Caco-2 (cell line): ENCODE measurements at regions of chr3 and their contacts with region 1.

Region 1: GRCh38 chr3:113745273-113746068 is 578 bp downstream of the NAA50 start:
- DNase-seq: peak; percentile 75 to 79
- H3K4me3 ChIP-seq: peak overlapping the region; percentile 78
- H3K4me3 Mint-ChIP-seq: peak overlapping the region; percentile 96
- H3K27ac Mint-ChIP-seq: peak overlapping the region; percentile 100
- H3K4me1 ChIP-seq: 0 out of 2 replicates have a peak, but pooled peaks cover 3% of the 10 kb centered on the region
- H3K4me1 Mint-ChIP-seq: peaks cover 16% of the 10 kb centered on the region
- H3K27me3 ChIP-seq: no peaks in the 10 kb centered on the region
- H3K27me3 Mint-ChIP-seq: no peaks in the 10 kb centered on the region
- CTCF ChIP-seq: peak; percentile 42 to 68

Region 2: GRCh38 chr3:113339616-113340244 is 405.7 kb before region 1 on chr3:
- CTCF ChIA-PET with region 1: no interaction called
- POLR2A ChIA-PET with region 1: no interaction called
- intact Hi-C with region 1: no loop called
- DNase-seq: no peak
- H3K4me3 ChIP-seq: no peak overlapping the region
- H3K4me3 Mint-ChIP-seq: no peak overlapping the region
- H3K27ac Mint-ChIP-seq: no peak overlapping the region
- H3K4me1 ChIP-seq: no peaks in the 10 kb centered on the region
- H3K4me1 Mint-ChIP-seq: no peaks in the 10 kb centered on the region
- H3K27me3 ChIP-seq: no peaks in the 10 kb centered on the region
- H3K27me3 Mint-ChIP-seq: no peaks in the 10 kb centered on the region
- CTCF ChIP-seq: peak; percentile 23 to 36

Region 3: GRCh38 chr3:113514265-113514769 is 231.2 kb before region 1 on chr3:
- CTCF ChIA-PET with region 1: interaction called, 6 read pairs
- POLR2A ChIA-PET with region 1: interaction called, 4 read pairs
- intact Hi-C with region 1: loop called (anchors 5 kb)
- DNase-seq: peak in 1 of 2 experiments; percentile 6
- H3K4me3 ChIP-seq: peak overlapping the region; percentile 83
- H3K4me3 Mint-ChIP-seq: no peak overlapping the region
- H3K27ac Mint-ChIP-seq: no peak overlapping the region
- H3K4me1 ChIP-seq: no peaks in the 10 kb centered on the region
- H3K4me1 Mint-ChIP-seq: peaks cover 8% of the 10 kb centered on the region
- H3K27me3 ChIP-seq: no peaks in the 10 kb centered on the region
- H3K27me3 Mint-ChIP-seq: no peaks in the 10 kb centered on the region
- CTCF ChIP-seq: no peak

Region 4: GRCh38 chr3:113676261-113676660 is 69.2 kb before region 1 on chr3:
- CTCF ChIA-PET with region 1: no interaction called
- POLR2A ChIA-PET with region 1: no interaction called
- intact Hi-C with region 1: no loop called
- DNase-seq: no peak
- H3K4me3 ChIP-seq: no peak overlapping the region
- H3K4me3 Mint-ChIP-seq: no peak overlapping the region
- H3K27ac Mint-ChIP-seq: no peak overlapping the region
- H3K4me1 ChIP-seq: no peaks in the 10 kb centered on the region
- H3K4me1 Mint-ChIP-seq: no peaks in the 10 kb centered on the region
- H3K27me3 ChIP-seq: no peaks in the 10 kb centered on the region
- H3K27me3 Mint-ChIP-seq: no peaks in the 10 kb centered on the region
- CTCF ChIP-seq: no peak

Region 5: GRCh38 chr3:113696658-113697499 is 48.6 kb before region 1 on chr3:
- CTCF ChIA-PET with region 1: interaction called, 5 read pairs
- POLR2A ChIA-PET with region 1: interaction called, 6 read pairs
- intact Hi-C with region 1: loop called (anchors 1 kb)
- DNase-seq: peak; percentile 99
- H3K4me3 ChIP-seq: peak overlapping the region; percentile 84
- H3K4me3 Mint-ChIP-seq: no peak overlapping the region
- H3K27ac Mint-ChIP-seq: no peak overlapping the region
- H3K4me1 ChIP-seq: peaks cover 18% of the 10 kb centered on the region
- H3K4me1 Mint-ChIP-seq: no peaks in the 10 kb centered on the region
- H3K27me3 ChIP-seq: no peaks in the 10 kb centered on the region
- H3K27me3 Mint-ChIP-seq: no peaks in the 10 kb centered on the region
- CTCF ChIP-seq: no peak

Region 6: DNA sequence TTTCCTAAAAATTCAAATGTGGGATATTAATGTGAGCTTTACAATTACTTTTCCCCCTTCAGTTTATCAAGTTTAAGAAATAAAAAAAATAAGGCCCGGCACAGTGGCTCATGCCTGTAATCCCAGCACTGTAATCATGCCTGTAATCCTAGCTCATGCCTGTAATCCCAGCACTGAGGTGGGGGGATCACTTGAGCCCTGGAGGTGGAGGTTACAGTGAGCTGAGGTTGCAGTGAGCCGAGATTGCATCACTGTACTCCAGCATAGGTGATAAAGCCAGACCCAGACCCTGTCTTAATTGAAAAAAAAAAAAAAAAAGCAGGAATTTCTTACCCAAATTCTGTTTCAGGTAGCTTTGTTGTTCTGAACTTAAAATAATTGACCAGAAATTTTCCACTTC is 19.2 kb after region 1 on chr3:
- CTCF ChIA-PET with region 1: interaction called, 16 read pairs
- POLR2A ChIA-PET with region 1: interaction called, 4 read pairs
- intact Hi-C with region 1: no loop called
- DNase-seq: no peak
- H3K4me3 ChIP-seq: no peak overlapping the region
- H3K4me3 Mint-ChIP-seq: no peak overlapping the region
- H3K27ac Mint-ChIP-seq: no peak overlapping the region
- H3K4me1 ChIP-seq: no peaks in the 10 kb centered on the region
- H3K4me1 Mint-ChIP-seq: no peaks in the 10 kb centered on the region
- H3K27me3 ChIP-seq: no peaks in the 10 kb centered on the region
- H3K27me3 Mint-ChIP-seq: no peaks in the 10 kb centered on the region
- CTCF ChIP-seq: no peak

Region 7: DNA sequence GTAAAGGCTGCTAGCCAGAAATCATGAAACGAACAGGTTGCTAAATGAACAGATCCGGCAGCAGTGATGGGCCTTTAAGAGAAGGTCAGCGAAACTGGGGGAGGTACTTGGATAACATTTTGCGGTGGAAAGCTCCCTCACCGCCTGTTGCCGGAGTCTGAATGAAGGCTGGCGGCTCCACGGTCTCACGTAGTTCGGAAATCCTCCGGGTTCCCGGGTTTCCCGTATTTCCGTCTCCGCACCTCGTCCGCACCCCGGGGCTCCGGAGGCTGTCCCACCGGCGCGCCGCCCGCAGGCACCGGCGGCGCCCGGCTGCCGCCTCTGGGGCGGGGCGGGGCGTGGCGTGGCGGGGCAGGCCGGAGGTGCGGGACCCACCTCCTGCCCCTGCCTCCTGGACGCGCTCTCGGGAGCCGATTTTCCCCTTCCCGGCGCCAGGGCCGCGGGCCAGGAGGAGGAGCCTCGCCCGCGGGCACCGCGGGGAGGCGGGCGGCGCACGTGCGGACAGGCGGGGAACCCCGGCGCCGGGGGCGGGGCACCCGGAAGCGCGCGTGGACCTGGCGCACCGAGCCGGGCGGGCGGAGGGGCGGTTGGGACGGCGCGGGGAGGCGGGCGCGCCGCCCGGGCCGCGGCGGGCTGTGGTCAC is 202.0 kb after region 1 on chr3 and contains the start of gene ZDHHC23:
- CTCF ChIA-PET with region 1: no interaction called
- POLR2A ChIA-PET with region 1: no interaction called
- intact Hi-C with region 1: loop called (anchors 5 kb)
- DNase-seq: peak; percentile 80 to 87
- H3K4me3 ChIP-seq: peak within 1 kb of the TSS; percentile 90
- H3K4me3 Mint-ChIP-seq: peak within 1 kb of the TSS; percentile 80
- H3K27ac Mint-ChIP-seq: no peak within 1 kb of the TSS
- H3K4me1 ChIP-seq: no peaks in the 10 kb centered on the region
- H3K4me1 Mint-ChIP-seq: peaks cover 7% of the 10 kb centered on the region
- H3K27me3 ChIP-seq: no peaks in the 10 kb centered on the region
- H3K27me3 Mint-ChIP-seq: peaks cover 15% of the 10 kb centered on the region
- CTCF ChIP-seq: no peak
- total RNA-seq, gene ZDHHC23: 9.0 and 9.1 TPM in 2 replicates